ENCODE measurements at regions of chr17 and their contacts with region 1.

Region 1: GRCh38 chr17:59378458-59379074 is 47.1 kb downstream of the YPEL2 start:
- DNase-seq: no peak
- H3K4me3 ChIP-seq: no peak overlapping the region
- H3K27ac ChIP-seq: peak overlapping the region; percentile 8 to 16
- H3K4me1 ChIP-seq: peaks cover 13% of the 10 kb centered on the region
- H3K27me3 ChIP-seq: no peaks in the 10 kb centered on the region
- CTCF ChIP-seq: no peak
- POLR2A ChIP-seq: no peak

Region 2: GRCh38 chr17:59220376-59221158 is 158.0 kb before region 1 on chr17 and contains the start of gene GDPD1:
- intact Hi-C with region 1: no loop called
- DNase-seq: peak; percentile 94
- H3K4me3 ChIP-seq: peak within 1 kb of the TSS; percentile 57 to 71
- H3K27ac ChIP-seq: peak within 1 kb of the TSS; percentile 77 to 89
- H3K4me1 ChIP-seq: no peaks in the 10 kb centered on the region
- H3K27me3 ChIP-seq: no peaks in the 10 kb centered on the region
- CTCF ChIP-seq: peak in 3 of 4 experiments; percentile 61 to 89 (median 84)
- POLR2A ChIP-seq: no peak
- total RNA-seq, gene GDPD1: 3.8 to 5.6 TPM

Region 3: GRCh38 chr17:59427425-59427921 is 48.9 kb after region 1 on chr17:
- intact Hi-C with region 1: loop called (anchors 5 kb)
- DNase-seq: no peak
- H3K4me3 ChIP-seq: no peak overlapping the region
- H3K27ac ChIP-seq: peak overlapping the region in 1 of 2 donors; percentile 14
- H3K4me1 ChIP-seq: no peaks in the 10 kb centered on the region
- H3K27me3 ChIP-seq: no peaks in the 10 kb centered on the region
- CTCF ChIP-seq: no peak
- POLR2A ChIP-seq: no peak